ENCODE measurements at regions of chr1 and their contacts with region 1.

Region 1: GRCh38 chr1:167936068-167936929 is at the start of gene DCAF6:
- DNase-seq: peak; percentile 98
- H3K4me3 ChIP-seq: peak within 1 kb of the TSS; percentile 66
- H3K4me3 Mint-ChIP-seq: peak within 1 kb of the TSS; percentile 82
- H3K27ac Mint-ChIP-seq: peak within 1 kb of the TSS; percentile 86
- H3K4me1 ChIP-seq: peaks cover 15% of the 10 kb centered on the region; the same call in 1 of the 2 replicates
- H3K4me1 Mint-ChIP-seq: peaks cover 6% of the 10 kb centered on the region
- H3K27me3 ChIP-seq: no peaks in the 10 kb centered on the region
- H3K27me3 Mint-ChIP-seq: no peaks in the 10 kb centered on the region
- CTCF ChIP-seq: no peak
- total RNA-seq, gene DCAF6: 41.9 and 53.0 TPM in 2 replicates

Region 2: DNA sequence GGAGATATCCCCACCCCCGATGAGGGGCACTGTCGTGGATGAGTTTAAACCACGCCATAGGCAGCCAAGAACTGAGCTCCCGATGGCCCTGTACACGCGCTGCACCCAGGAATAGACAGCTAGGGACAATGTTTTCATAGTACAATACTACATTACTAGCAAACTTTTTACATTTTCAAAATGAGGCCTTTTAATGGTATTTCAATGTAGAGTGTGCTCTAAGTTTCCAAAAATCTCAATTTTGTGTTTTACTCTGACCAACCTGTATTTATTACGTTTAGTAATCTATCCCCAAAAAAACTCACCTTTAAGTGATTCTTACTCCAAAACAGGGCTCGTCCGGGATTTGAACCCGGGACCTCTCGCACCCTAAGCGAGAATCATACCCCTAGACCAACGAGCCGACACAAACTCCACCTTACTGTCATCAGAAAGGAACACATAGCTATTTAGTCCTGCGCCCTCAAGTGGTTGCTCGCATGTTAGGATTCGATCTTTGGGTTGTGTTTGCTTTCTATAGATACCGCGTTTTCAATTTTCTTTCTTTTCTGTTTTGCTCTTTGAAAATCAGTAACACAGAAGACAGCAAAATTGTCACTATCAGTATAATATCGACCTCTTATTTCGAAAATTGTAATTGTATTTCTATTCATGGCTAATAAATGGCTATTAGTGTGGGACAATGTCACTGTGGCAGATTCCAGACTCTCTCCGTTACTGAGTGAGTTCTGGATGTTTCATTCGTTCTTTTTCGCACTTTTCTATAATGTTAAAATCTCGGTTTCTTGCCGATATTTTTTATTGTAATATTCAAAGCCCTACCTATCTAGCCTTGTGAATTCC is 220.9 kb before region 1 on chr1:
- CTCF ChIA-PET with region 1: no interaction called
- POLR2A ChIA-PET with region 1: interaction called, 5 read pairs
- intact Hi-C with region 1: loop called (anchors 2 kb)
- DNase-seq: peak; percentile 84 to 89
- H3K4me3 ChIP-seq: peak overlapping the region; percentile 93
- H3K4me3 Mint-ChIP-seq: peak overlapping the region; percentile 83
- H3K27ac Mint-ChIP-seq: peak overlapping the region; percentile 98
- H3K4me1 ChIP-seq: peaks cover 34% of the 10 kb centered on the region
- H3K4me1 Mint-ChIP-seq: peaks cover 32% of the 10 kb centered on the region
- H3K27me3 ChIP-seq: no peaks in the 10 kb centered on the region
- H3K27me3 Mint-ChIP-seq: peaks cover 8% of the 10 kb centered on the region
- CTCF ChIP-seq: peak; percentile 81 to 89

Region 3: DNA sequence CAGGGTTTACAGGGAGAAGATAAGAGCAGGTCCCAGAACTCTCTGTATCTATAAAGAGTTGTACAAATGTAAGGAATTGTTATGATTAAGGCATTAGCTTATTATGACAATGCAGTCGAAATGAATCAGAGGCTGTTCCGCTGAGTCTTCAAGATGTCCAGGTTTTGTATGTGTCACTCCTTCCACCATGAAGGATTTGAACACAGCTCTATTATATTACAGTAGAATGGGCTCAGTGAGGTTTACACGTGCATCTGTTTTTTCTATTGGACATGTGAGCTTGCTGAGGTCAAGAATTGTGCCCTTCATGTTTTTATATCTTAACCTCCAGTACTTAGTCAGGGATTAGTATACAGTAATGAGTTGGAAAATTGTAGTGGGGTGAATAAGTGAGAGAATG is 128.2 kb before region 1 on chr1:
- CTCF ChIA-PET with region 1: no interaction called
- POLR2A ChIA-PET with region 1: no interaction called
- intact Hi-C with region 1: no loop called
- DNase-seq: no peak
- H3K4me3 ChIP-seq: no peak overlapping the region
- H3K4me3 Mint-ChIP-seq: no peak overlapping the region
- H3K27ac Mint-ChIP-seq: no peak overlapping the region
- H3K4me1 ChIP-seq: peaks cover 17% of the 10 kb centered on the region
- H3K4me1 Mint-ChIP-seq: peaks cover 20% of the 10 kb centered on the region
- H3K27me3 ChIP-seq: no peaks in the 10 kb centered on the region
- H3K27me3 Mint-ChIP-seq: no peaks in the 10 kb centered on the region
- CTCF ChIP-seq: no peak

Region 4: DNA sequence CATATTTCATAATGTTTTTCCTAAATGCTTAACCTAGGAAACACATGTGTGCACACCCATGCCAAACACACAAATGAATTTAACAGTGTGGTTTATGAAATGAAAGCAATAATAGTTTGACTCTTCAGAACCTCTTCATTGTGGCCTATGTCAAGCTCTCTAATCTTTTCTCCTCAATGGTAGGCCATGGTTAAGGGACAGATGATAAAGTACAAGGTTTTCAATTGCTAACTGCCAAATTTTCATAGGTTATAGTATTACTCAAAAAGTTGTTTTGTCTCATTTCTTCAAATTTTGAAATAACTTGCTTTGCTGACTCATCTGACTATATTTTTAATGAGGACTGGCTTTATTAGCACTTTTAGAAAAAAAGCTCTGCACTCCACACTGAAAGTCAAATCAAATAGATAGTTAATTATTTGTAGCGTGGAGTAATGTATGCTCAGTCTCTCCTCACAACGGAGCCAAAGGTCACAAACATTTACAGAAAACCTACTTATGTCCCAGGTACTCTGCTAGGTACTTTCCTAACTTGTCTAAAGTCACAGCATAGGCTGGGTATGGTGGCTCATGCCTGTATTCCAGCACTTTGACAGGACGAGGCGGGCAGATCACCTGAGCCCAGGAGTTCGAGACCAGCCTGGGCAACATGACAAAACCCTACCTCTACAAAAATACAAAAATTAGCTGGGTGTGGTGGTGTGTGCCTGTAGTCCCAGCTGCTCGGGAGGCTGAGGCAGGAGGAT is 19.4 kb before region 1 on chr1:
- CTCF ChIA-PET with region 1: no interaction called
- POLR2A ChIA-PET with region 1: interaction called, 4 read pairs
- intact Hi-C with region 1: loop called (anchors 1 kb)
- DNase-seq: peak in 1 of 2 experiments; percentile 33
- H3K4me3 ChIP-seq: no peak overlapping the region
- H3K4me3 Mint-ChIP-seq: peak overlapping the region; percentile 37
- H3K27ac Mint-ChIP-seq: peak overlapping the region; percentile 49
- H3K4me1 ChIP-seq: peaks cover 43% of the 10 kb centered on the region
- H3K4me1 Mint-ChIP-seq: peaks cover 20% of the 10 kb centered on the region
- H3K27me3 ChIP-seq: no peaks in the 10 kb centered on the region
- H3K27me3 Mint-ChIP-seq: no peaks in the 10 kb centered on the region
- CTCF ChIP-seq: no peak

Region 5: GRCh38 chr1:167950569-167950968 is 14.3 kb after region 1 on chr1:
- CTCF ChIA-PET with region 1: no interaction called
- POLR2A ChIA-PET with region 1: no interaction called
- intact Hi-C with region 1: no loop called
- DNase-seq: no peak
- H3K4me3 ChIP-seq: no peak overlapping the region
- H3K4me3 Mint-ChIP-seq: no peak overlapping the region
- H3K27ac Mint-ChIP-seq: no peak overlapping the region
- H3K4me1 ChIP-seq: peaks cover 23% of the 10 kb centered on the region
- H3K4me1 Mint-ChIP-seq: peaks cover 22% of the 10 kb centered on the region
- H3K27me3 ChIP-seq: no peaks in the 10 kb centered on the region
- H3K27me3 Mint-ChIP-seq: no peaks in the 10 kb centered on the region
- CTCF ChIP-seq: no peak